ENCODE measurements at regions of chr16 and their contacts with region 1.

Region 1: GRCh38 chr16:56643080-56643778 is 4.8 kb downstream of the MT1A start:
- DNase-seq: peak; percentile 75
- H3K4me3 Mint-ChIP-seq: peak overlapping the region; percentile 70
- H3K27ac Mint-ChIP-seq: no peak overlapping the region
- H3K4me1 Mint-ChIP-seq: peaks cover 25% of the 10 kb centered on the region
- H3K27me3 Mint-ChIP-seq: peaks cover 52% of the 10 kb centered on the region

Region 2: GRCh38 chr16:56657555-56658326 is 14.5 kb after region 1 on chr16 and contains the start of gene MT1F:
- intact Hi-C with region 1: loop called (anchors 1 kb)
- DNase-seq: peak; percentile 38
- H3K4me3 Mint-ChIP-seq: peak within 1 kb of the TSS; percentile 98
- H3K27ac Mint-ChIP-seq: peak within 1 kb of the TSS; percentile 82
- H3K4me1 Mint-ChIP-seq: peaks cover 26% of the 10 kb centered on the region
- H3K27me3 Mint-ChIP-seq: peaks cover 21% of the 10 kb centered on the region
- total RNA-seq, gene MT1F: 4.3 and 5.2 TPM in 2 replicates

Measured in activated T-helper 1 cell treated with anti-CD3 and anti-CD28 coated beads, Interleukin-12 subunit alpha, Interleukin-12 subunit beta, Interleukin-2, Interleukin-4 antibody, amounts not matched to agents 30 ng/mL and 10 ng/mL and 1 ng/mL, durations not matched to agents 14 hours and 24 hours and 36 hours (primary cell).